AG04449 (cell line): ENCODE measurements at regions of chr22 and their contacts with region 1.

Region 1: DNA sequence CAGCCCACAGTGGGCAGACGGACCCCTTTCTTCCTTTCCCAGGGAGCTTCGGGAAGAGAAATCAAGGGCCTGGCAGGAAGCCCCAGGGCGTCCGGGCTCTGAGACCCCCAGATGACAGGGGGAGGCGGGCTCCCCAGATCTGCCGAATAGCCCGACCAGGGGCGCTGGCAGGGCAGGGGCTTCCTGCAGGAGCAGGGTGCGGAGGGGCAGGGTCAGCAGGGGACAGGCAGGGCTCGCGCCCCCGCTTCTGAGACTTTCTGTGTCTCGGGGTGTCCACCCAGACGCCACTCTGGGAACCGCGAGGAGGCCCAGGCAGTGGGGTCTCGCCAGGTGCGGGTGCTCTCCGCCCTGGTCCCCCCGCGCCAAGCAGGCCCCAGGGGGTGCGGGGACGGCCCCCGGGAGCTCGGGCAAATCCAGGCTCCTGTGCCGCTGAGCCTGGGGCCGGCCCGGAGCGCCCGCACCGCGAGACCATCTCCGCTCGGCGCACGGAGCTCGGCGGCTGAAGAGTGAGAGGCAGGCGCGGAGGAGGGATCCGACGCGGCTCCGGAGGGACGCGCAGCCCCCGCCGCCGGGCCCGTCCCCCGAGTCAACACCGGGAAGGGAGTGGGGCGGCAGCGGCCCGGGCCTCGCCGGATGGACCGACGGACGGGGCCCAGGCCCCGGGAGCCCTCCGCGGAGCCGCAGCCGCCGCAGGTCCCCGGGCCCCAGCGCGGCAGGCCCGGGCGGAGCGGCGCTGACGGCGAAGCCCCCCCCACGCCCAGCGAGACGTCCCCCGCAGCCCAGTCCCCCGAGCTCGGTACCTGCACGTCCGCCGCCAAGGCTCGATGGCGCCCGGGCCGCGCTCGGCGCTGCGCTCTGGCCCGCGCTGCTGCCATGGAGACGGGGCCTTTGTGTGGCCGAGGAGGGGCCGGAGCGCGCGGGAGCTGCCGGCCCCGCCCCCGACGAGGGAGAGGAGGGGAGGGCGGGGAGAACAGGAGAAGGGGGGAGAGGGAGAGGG is at the start of gene PLXNB2:
- DNase-seq: no peak
- H3K4me3 ChIP-seq: peak within 1 kb of the TSS; percentile 89
- CTCF ChIP-seq: no peak

Region 2: DNA sequence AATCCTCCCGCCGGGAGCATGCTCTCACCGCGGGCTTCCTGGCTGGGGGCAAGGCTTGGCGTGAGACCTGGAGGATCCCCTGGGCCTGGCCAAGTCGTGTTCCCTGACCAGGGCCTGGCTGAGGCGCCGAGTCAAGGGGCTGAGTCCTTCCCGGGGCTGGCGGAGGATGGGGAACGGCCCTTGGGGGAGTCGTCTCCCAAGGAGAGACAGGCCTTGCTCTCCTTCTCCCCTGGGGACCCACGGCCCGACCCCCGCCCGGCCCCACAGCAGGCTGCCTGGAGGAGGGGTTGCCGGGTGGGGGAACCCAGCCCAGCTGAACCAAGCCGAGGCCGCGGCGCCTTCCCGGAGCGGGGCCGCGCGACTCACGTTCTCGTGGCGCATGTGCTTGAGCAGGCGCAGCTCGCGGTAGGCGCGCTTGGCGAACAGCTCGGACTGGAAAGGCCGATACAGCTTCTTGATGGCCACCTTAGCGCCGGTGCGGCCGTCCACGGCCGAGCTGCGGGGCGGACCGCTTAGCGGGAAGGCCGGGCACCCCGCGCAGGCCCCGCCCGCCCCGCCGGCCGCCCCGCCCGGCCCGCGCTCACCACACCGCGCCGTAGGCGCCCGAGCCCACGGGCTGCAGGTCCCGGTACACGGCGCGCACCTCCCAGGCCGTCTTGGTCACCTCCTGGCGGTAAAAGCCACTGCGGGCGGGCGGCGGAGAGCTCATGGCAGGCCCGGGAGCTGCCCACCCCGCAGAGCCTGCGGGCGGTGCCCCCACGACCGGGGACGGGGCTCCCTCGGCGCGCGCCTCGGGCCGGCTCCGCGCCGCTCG is 46.0 kb before region 1 on chr22:
- CTCF ChIA-PET with region 1: interaction called, 3 read pairs
- POLR2A ChIA-PET with region 1: interaction called, 11 read pairs
- DNase-seq: no peak
- H3K4me3 ChIP-seq: peak overlapping the region; percentile 70
- CTCF ChIP-seq: no peak

Region 3: GRCh38 chr22:50293441-50294318 is 13.4 kb before region 1 on chr22:
- CTCF ChIA-PET with region 1: interaction called, 6 read pairs
- POLR2A ChIA-PET with region 1: interaction called, 43 read pairs
- DNase-seq: no peak
- H3K4me3 ChIP-seq: peak overlapping the region; percentile 50
- CTCF ChIP-seq: no peak

Region 4: GRCh38 chr22:50620593-50621355 is 313.7 kb after region 1 on chr22:
- CTCF ChIA-PET with region 1: no interaction called
- POLR2A ChIA-PET with region 1: no interaction called
- DNase-seq: no peak
- H3K4me3 ChIP-seq: no peak overlapping the region
- CTCF ChIP-seq: no peak